ENCODE measurements at regions of chr3 and their contacts with region 1.

Region 1: GRCh38 chr3:19961960-19962359 is 15.1 kb downstream of the RAB5A start:
- DNase-seq: no peak

Region 2: DNA sequence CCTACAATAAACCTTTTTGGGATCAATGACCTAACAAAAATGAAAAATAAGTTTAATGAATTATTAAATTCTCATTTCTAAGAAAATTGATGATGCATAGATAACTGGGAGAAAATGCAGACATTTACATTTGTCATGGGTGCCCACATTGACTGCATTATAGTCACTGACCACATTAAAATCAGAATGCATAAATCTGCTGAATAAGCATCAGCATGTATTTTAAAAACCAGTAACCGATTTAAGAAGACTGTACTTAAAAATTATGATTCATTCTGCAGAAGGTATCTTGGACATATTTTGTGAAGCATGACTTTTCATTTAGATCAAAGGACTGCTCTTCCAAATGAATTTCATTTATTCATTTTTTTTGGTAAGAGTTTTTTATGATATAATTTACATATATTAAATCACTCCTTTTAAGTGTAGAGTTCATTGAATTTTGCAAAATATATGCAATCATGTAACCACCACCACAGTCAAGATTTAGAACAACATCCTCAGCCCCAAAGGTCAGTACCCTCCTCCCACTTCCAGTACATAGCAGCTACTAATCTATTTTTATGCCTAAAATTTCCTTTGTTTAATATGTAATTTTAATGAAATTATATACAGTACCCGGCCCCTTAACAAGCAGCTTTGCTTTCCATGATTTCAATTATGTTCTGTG is 801.9 kb before region 1 on chr3:
- intact Hi-C with region 1: no loop called
- DNase-seq: no peak

Region 3: DNA sequence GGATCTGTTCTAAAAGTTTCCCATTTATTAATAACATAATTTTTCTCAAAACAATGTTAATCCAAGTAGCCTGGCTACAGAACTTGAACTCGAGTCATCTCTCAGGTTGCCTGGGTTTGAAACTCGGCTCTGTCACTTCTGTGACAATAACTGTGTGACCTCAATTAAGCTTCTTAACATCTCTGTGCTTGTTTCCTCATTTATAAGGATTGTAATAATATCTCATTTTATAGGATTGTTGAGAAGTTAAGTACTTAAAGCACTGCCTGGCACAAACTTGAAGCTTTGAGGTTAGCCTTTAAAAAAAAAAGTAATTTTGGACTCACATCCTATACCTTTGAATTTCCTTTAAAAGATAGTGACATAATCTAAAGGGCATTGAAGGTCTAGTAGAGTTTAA is 11.6 kb before region 1 on chr3:
- intact Hi-C with region 1: loop called in 1 of 2 experiments (anchors 1 kb)
- DNase-seq: no peak